ENCODE measurements at regions of chr6 and their contacts with region 1.

Region 1: GRCh38 chr6:28981833-28982475 is 23.2 kb downstream of the ZNF311 start:
- DNase-seq: peak; percentile 90
- H3K4me3 ChIP-seq: peak overlapping the region; percentile 59
- H3K27ac ChIP-seq: peak overlapping the region; percentile 73
- H3K4me1 ChIP-seq: peaks cover 32% of the 10 kb centered on the region
- H3K27me3 ChIP-seq: no peaks in the 10 kb centered on the region
- CTCF ChIP-seq: no peak

Region 2: GRCh38 chr6:27986928-27987725 is 994.8 kb before region 1 on chr6:
- CTCF ChIA-PET with region 1: no interaction called
- POLR2A ChIA-PET with region 1: no interaction called
- intact Hi-C with region 1: no loop called
- DNase-seq: no peak
- H3K4me3 ChIP-seq: no peak overlapping the region
- H3K27ac ChIP-seq: no peak overlapping the region
- H3K4me1 ChIP-seq: no peaks in the 10 kb centered on the region
- H3K27me3 ChIP-seq: peaks cover 13% of the 10 kb centered on the region
- CTCF ChIP-seq: no peak

Region 3: DNA sequence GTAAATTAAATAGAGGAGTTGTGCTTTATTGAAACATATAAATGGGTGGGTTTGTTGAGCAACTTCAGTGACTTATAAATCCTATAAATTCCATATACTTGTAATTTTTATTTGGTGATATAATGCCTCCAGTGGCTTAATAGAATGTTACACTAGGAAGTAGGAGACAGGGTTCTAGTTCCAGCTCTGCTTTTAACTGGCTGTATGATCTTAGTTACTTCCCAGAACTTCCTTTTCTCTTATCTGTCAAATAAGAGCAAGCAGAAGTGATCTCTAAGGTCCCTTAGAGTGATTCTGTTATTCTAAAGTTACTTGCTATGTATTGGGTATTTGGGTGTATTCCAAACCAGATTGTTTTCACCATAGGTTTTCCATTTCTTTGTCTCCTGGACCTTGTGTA is 548.8 kb before region 1 on chr6:
- CTCF ChIA-PET with region 1: no interaction called
- POLR2A ChIA-PET with region 1: no interaction called
- intact Hi-C with region 1: no loop called
- DNase-seq: no peak
- H3K4me3 ChIP-seq: no peak overlapping the region
- H3K27ac ChIP-seq: no peak overlapping the region
- H3K4me1 ChIP-seq: no peaks in the 10 kb centered on the region
- H3K27me3 ChIP-seq: no peaks in the 10 kb centered on the region
- CTCF ChIP-seq: no peak

Region 4: GRCh38 chr6:28643017-28643740 is 338.8 kb before region 1 on chr6:
- CTCF ChIA-PET with region 1: no interaction called
- POLR2A ChIA-PET with region 1: no interaction called
- intact Hi-C with region 1: no loop called
- DNase-seq: peak; percentile 91
- H3K4me3 ChIP-seq: no peak overlapping the region
- H3K27ac ChIP-seq: no peak overlapping the region
- H3K4me1 ChIP-seq: no peaks in the 10 kb centered on the region
- H3K27me3 ChIP-seq: no peaks in the 10 kb centered on the region
- CTCF ChIP-seq: no peak

Region 5: GRCh38 chr6:28807682-28808280 is 174.2 kb before region 1 on chr6:
- CTCF ChIA-PET with region 1: no interaction called
- POLR2A ChIA-PET with region 1: no interaction called
- intact Hi-C with region 1: loop called (anchors 5 kb)
- DNase-seq: peak; percentile 88
- H3K4me3 ChIP-seq: peak overlapping the region; percentile 55
- H3K27ac ChIP-seq: no peak overlapping the region
- H3K4me1 ChIP-seq: peaks cover 14% of the 10 kb centered on the region
- H3K27me3 ChIP-seq: no peaks in the 10 kb centered on the region
- CTCF ChIP-seq: no peak

Region 6: GRCh38 chr6:28863604-28864320 is 118.2 kb before region 1 on chr6:
- CTCF ChIA-PET with region 1: interaction called, 3 read pairs
- POLR2A ChIA-PET with region 1: no interaction called
- intact Hi-C with region 1: loop called (anchors 10 kb)
- DNase-seq: peak; percentile 90
- H3K4me3 ChIP-seq: peak overlapping the region; percentile 69
- H3K27ac ChIP-seq: peak overlapping the region; percentile 73
- H3K4me1 ChIP-seq: peaks cover 15% of the 10 kb centered on the region
- H3K27me3 ChIP-seq: no peaks in the 10 kb centered on the region
- CTCF ChIP-seq: no peak

Region 7: DNA sequence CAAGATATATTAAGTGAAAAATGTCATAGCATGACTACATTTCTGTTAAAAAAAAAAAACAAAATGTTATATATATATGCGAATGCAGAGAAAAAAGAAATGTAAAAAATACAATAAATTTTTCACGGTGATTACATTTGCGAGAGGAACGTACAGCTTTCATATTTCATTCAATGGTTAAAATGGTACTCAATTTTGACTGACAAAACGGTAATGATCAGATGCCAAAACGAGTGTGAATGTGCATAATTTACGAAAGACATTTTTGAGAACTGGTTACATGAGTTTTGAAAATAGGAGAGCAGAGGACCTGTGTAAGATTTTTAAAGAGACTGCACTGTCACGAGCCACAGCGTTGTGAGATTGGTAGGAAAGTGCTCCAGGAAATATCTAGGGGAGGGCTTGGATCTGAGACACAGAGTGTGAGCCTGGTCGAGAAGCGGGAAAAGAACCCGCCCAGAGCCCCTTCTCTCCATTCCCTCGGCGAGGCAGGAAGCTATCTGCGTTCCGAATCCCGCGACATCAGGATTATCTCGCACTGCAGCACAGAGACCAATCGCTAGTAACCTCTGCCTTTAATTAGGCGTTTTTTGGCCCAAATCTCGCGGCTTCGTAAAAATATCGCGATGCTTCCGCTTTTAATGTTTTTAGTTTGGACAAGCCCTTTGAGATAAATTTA is 86.7 kb before region 1 on chr6:
- CTCF ChIA-PET with region 1: no interaction called
- POLR2A ChIA-PET with region 1: no interaction called
- intact Hi-C with region 1: loop called (anchors 1 kb)
- DNase-seq: peak; percentile 97
- H3K4me3 ChIP-seq: peak overlapping the region; percentile 68
- H3K27ac ChIP-seq: peak overlapping the region; percentile 97
- H3K4me1 ChIP-seq: peaks cover 5% of the 10 kb centered on the region
- H3K27me3 ChIP-seq: no peaks in the 10 kb centered on the region
- CTCF ChIP-seq: no peak

Region 8: GRCh38 chr6:28953039-28953584 is 28.8 kb before region 1 on chr6:
- CTCF ChIA-PET with region 1: no interaction called
- POLR2A ChIA-PET with region 1: no interaction called
- intact Hi-C with region 1: loop called (anchors 1 kb)
- DNase-seq: peak; percentile 87
- H3K4me3 ChIP-seq: peak overlapping the region; percentile 57
- H3K27ac ChIP-seq: peak overlapping the region; percentile 0
- H3K4me1 ChIP-seq: no peaks in the 10 kb centered on the region
- H3K27me3 ChIP-seq: no peaks in the 10 kb centered on the region
- CTCF ChIP-seq: no peak

Region 9: DNA sequence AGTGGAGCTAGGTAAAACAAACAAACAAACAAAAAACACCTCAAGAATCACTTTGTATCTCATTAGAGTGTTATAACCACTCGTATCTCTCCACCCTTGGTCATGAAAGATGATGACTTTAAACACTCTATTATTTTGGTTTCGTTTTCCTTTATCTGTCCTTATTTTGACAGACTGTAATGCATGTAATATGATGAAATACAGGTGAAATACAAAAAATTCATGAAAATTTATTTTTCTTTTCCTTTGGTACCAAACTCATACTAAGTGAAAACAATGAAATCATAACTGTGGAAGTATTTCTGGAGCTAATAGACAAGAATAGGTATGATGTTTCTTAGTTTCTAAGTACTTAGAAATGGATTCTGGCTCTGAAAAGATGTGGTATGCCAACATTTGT is 417.6 kb after region 1 on chr6:
- CTCF ChIA-PET with region 1: no interaction called
- POLR2A ChIA-PET with region 1: no interaction called
- intact Hi-C with region 1: no loop called
- DNase-seq: no peak
- H3K4me3 ChIP-seq: no peak overlapping the region
- H3K27ac ChIP-seq: no peak overlapping the region
- H3K4me1 ChIP-seq: no peaks in the 10 kb centered on the region
- H3K27me3 ChIP-seq: peaks cover 27% of the 10 kb centered on the region
- CTCF ChIP-seq: no peak